ENCODE measurements at regions of chr20 and their contacts with region 1.

Region 1: DNA sequence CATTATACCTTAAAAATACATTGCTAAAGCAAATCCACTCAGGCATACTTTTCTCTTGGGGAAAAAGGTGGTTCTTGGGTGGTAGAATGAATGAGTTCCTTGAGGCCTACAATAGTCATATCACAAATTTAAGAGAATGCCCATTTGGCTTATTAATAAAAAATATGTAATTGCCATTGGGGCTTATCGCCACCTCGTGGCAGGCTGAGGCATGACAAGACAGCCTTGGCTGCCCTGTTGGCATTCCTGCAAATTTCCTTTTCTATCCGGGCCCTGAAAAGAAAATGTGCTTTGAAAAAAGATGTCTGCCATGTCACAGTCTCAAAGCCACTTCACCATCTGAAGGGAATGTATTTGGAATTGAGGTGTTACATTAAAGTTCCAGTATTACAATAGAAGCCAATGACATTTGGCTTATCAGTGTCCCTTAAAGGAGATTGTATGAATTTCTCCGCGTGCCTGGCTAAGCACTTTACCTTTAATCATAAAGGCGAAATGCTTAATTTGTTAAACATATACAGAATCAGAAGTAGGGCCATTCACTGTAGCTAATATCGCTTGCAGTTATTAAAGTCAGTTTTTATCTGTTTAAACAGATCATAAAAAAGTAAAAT is 188.3 kb upstream of the ZFP64 start:
- DNase-seq: peak; percentile 35 to 81 (median 58)
- H3K4me3 ChIP-seq: no peak overlapping the region
- H3K27ac ChIP-seq: no peak overlapping the region
- H3K4me1 ChIP-seq: no peaks in the 10 kb centered on the region
- H3K27me3 ChIP-seq: no peaks in the 10 kb centered on the region
- CTCF ChIP-seq: peak; percentile 71 to 98 (median 82)
- POLR2A ChIP-seq: no peak

Region 2: DNA sequence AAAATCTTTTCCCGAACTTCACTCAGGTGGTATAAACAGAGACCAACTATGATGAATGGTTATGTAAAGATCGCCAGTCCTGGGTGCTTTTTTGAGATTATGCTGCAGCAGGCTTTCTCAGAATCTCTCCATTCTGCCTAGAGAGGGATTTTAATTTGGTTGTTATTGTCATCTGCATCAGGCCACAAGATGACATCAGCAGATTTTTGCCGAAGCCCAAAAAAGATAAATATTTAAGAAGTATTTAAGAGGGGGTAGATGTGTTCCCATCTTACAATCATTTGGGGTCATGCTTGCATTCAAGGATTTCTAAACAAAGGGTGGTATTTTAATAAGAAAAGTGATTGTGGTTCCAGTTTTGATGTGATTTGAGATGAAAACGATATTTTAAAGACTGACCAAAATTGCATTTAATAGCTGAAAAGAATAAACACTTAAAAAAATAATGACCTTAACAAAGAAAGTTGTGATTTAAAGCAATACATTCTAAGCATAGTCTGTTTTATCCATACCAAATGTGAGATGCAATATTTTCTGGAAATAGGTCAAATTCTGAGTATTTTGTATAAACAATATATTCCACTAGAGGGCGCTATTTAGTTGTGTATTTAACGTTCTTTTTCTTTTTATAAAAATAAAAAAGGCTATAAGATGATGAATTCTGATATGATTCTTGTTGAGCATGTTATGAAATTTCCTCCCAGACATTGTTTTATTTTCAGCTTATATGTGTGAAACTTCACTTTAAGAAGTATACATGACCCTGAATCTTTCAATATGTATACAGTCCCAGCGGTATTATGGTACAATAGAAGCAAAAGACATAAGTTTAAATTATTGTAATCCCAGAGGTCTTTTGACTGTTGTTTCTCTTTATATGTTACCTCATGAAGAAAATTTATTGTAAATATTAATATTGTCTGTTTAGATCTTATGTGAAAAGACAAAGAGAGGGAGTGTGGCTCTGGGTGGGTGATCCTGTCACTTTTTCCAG is 137.3 kb before region 1 on chr20:
- intact Hi-C with region 1: loop called in 1 of 2 experiments (anchors 10 kb)
- DNase-seq: no peak
- H3K4me3 ChIP-seq: no peak overlapping the region
- H3K27ac ChIP-seq: no peak overlapping the region
- H3K4me1 ChIP-seq: peaks cover 0 to 4% of the 10 kb centered on the region in 2 donors
- H3K27me3 ChIP-seq: no peaks in the 10 kb centered on the region
- CTCF ChIP-seq: peak; percentile 31 to 81 (median 63)
- POLR2A ChIP-seq: no peak

Region 3: GRCh38 chr20:52637201-52637600 is 257.4 kb after region 1 on chr20:
- intact Hi-C with region 1: no loop called
- DNase-seq: no peak
- H3K4me3 ChIP-seq: no peak overlapping the region
- H3K27ac ChIP-seq: no peak overlapping the region
- H3K4me1 ChIP-seq: no peaks in the 10 kb centered on the region
- H3K27me3 ChIP-seq: no peaks in the 10 kb centered on the region
- CTCF ChIP-seq: no peak
- POLR2A ChIP-seq: no peak

Measured in adrenal gland (tissue), 19 donors.